Naive thymus-derived CD4-positive, alpha-beta T cell (primary cell): ENCODE measurements at regions of chr19 and their contacts with region 1.

Region 1: GRCh38 chr19:45692187-45693105 is at the start of gene QPCTL:
- DNase-seq: peak; percentile 76 to 99 (median 97)
- ATAC-seq: peak; percentile 93
- H3K4me3 ChIP-seq: peak within 1 kb of the TSS; percentile 90
- H3K4me3 Mint-ChIP-seq: peak within 1 kb of the TSS; percentile 89 to 99 (median 97)
- H3K27ac ChIP-seq: peak within 1 kb of the TSS; percentile 89
- H3K27ac Mint-ChIP-seq: peak within 1 kb of the TSS; percentile 94 to 98 (median 96)
- H3K4me1 ChIP-seq: peaks cover 7 to 15% of the 10 kb centered on the region in 2 donors
- H3K4me1 Mint-ChIP-seq: peaks cover 13 to 38% (median 22%) of the 10 kb centered on the region in 7 donors
- H3K27me3 ChIP-seq: no peaks in the 10 kb centered on the region
- H3K27me3 Mint-ChIP-seq: peaks cover 0 to 2% (median 0%) of the 10 kb centered on the region in 5 donors
- total RNA-seq, gene QPCTL: 6.1 to 8.9 (median 7.9) TPM

Region 2: GRCh38 chr19:45178262-45179071 is 514.0 kb before region 1 on chr19 and contains the start of gene BLOC1S3:
- CTCF ChIA-PET with region 1: no interaction called
- POLR2A ChIA-PET with region 1: no interaction called
- intact Hi-C with region 1: loop called in 1 of 2 experiments (anchors 10 kb)
- DNase-seq: peak; percentile 97 to 100 (median 100)
- ATAC-seq: peak; percentile 93
- H3K4me3 ChIP-seq: peak within 1 kb of the TSS; percentile 88
- H3K4me3 Mint-ChIP-seq: peak within 1 kb of the TSS; percentile 87 to 99 (median 96)
- H3K27ac ChIP-seq: peak within 1 kb of the TSS; percentile 83
- H3K27ac Mint-ChIP-seq: peak within 1 kb of the TSS; percentile 88 to 98 (median 94)
- H3K4me1 ChIP-seq: peaks cover 23 to 34% of the 10 kb centered on the region in 2 donors
- H3K4me1 Mint-ChIP-seq: peaks cover 9 to 63% (median 49%) of the 10 kb centered on the region in 7 donors
- H3K27me3 ChIP-seq: no peaks in the 10 kb centered on the region
- H3K27me3 Mint-ChIP-seq: no peaks in the 10 kb centered on the region
- total RNA-seq, gene BLOC1S3: 13.7 to 24.9 (median 15.4) TPM

Region 3: DNA sequence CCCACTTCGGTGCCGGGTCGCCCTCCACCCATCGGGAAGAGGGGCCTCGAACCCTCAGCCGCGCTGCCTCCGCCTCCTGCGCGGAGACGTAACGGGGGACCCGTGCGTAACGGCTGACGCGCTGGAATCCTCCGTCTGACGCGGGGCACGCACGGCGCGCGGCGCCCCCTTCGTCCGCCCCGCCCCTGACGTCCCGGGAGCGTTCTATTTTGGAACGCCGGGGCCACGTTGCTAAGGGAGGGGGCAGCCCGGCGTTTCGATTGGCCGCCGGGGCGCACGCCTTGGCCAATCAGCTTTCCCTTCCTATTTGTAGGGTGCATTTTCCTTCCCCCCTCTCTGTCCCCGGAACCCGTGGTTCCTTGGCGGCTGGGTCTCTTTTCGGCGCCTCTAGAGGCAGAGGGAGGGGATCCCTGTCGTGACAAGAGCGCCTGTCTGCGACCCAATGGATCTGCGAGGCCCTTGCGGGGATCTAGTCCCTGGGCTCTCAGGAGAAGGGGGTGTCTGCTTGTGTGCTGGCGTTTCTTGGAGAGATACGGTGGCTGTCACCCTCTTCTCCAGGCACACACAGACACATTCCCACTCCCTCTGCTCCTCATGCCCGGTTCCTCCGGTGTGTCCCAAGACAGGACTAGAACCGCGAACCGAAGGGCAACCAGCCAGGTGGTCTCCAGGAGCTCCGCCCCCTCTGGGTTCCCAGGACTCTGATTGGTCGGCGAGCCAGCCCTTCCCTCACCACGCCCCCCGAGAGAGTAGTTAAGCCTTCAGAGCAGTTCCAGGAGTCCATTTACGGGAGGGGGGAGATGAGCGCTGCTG is 223.1 kb before region 1 on chr19:
- CTCF ChIA-PET with region 1: no interaction called
- POLR2A ChIA-PET with region 1: no interaction called
- intact Hi-C with region 1: loop called (anchors 1 kb)
- DNase-seq: peak; percentile 79 to 98 (median 97)
- ATAC-seq: peak; percentile 70
- H3K4me3 ChIP-seq: peak overlapping the region; percentile 99
- H3K4me3 Mint-ChIP-seq: peak overlapping the region; percentile 87 to 96 (median 94)
- H3K27ac ChIP-seq: peak overlapping the region; percentile 98
- H3K27ac Mint-ChIP-seq: peak overlapping the region; percentile 90 to 100 (median 99)
- H3K4me1 ChIP-seq: peaks cover 10 to 16% of the 10 kb centered on the region in 2 donors
- H3K4me1 Mint-ChIP-seq: peaks cover 5 to 39% (median 19%) of the 10 kb centered on the region in 7 donors
- H3K27me3 ChIP-seq: no peaks in the 10 kb centered on the region
- H3K27me3 Mint-ChIP-seq: peaks cover 9 to 57% (median 17%) of the 10 kb centered on the region in 5 donors

Region 4: DNA sequence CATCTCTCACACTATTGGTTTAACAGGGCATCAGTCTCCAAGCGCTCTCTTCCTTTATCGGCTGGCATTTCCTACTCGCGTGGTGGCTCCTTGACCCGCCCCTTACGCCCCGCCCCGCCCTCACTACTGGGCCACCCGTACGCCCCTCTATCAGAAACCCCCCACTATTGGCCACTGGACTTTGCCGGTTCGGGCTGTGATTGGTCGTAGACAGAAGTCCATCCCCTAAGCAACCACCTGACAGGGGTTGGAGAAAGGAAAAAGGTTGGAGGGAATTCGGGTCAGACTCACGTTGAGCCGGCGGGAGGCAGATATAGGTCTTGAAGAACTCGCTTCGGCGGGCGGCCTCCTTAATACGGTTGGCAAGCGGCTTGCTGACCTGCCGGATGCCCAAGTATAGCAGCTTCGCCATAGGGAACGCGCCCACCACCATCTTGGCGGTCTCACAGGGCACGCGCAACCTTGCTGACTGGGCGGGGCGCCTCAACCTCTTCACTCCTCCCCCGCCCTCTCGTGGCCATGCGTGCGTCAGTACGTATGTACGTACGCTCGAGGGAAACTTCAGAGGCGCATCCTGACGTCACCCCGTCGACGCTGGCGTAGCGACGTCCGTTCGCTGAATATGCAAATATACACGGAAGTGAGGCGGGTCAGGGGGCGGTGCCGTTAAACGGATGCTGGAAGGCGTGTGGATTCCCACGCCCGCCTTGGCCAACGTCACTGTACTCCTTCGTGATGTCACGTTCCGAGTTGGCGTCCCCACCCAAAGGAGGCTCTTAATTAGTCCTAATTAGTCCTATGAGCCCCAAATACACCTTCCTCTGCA is 107.9 kb before region 1 on chr19 and contains the start of gene OPA3:
- CTCF ChIA-PET with region 1: no interaction called
- POLR2A ChIA-PET with region 1: no interaction called
- intact Hi-C with region 1: loop called (anchors 1 kb)
- DNase-seq: peak; percentile 88 to 100 (median 99)
- ATAC-seq: peak; percentile 92
- H3K4me3 ChIP-seq: peak within 1 kb of the TSS; percentile 85
- H3K4me3 Mint-ChIP-seq: peak within 1 kb of the TSS; percentile 90 to 99 (median 94)
- H3K27ac ChIP-seq: peak within 1 kb of the TSS; percentile 99
- H3K27ac Mint-ChIP-seq: peak within 1 kb of the TSS; percentile 97 to 100 (median 99)
- H3K4me1 ChIP-seq: peaks cover 6 to 10% of the 10 kb centered on the region in 2 donors
- H3K4me1 Mint-ChIP-seq: peaks cover 0 to 28% (median 20%) of the 10 kb centered on the region in 7 donors
- H3K27me3 ChIP-seq: no peaks in the 10 kb centered on the region
- H3K27me3 Mint-ChIP-seq: peaks cover 5 to 9% (median 7%) of the 10 kb centered on the region in 5 donors
- total RNA-seq, gene OPA3: 7.8 to 14.3 (median 9.0) TPM

Region 5: GRCh38 chr19:45717166-45717982 is 24.9 kb after region 1 on chr19:
- CTCF ChIA-PET with region 1: interaction called, 33 read pairs
- POLR2A ChIA-PET with region 1: interaction called, 22 read pairs
- intact Hi-C with region 1: loop called (anchors 1 kb)
- DNase-seq: peak; percentile 92 to 99 (median 98)
- ATAC-seq: peak; percentile 98
- H3K4me3 ChIP-seq: peak overlapping the region; percentile 80
- H3K4me3 Mint-ChIP-seq: peak overlapping the region; percentile 89 to 99 (median 95)
- H3K27ac ChIP-seq: peak overlapping the region; percentile 89
- H3K27ac Mint-ChIP-seq: peak overlapping the region; percentile 88 to 97 (median 96)
- H3K4me1 ChIP-seq: peaks cover 17 to 26% of the 10 kb centered on the region in 2 donors
- H3K4me1 Mint-ChIP-seq: peaks cover 26 to 55% (median 38%) of the 10 kb centered on the region in 7 donors
- H3K27me3 ChIP-seq: no peaks in the 10 kb centered on the region
- H3K27me3 Mint-ChIP-seq: no peaks in the 10 kb centered on the region

Region 6: GRCh38 chr19:45779231-45780145 is 87.0 kb after region 1 on chr19:
- CTCF ChIA-PET with region 1: no interaction called
- POLR2A ChIA-PET with region 1: no interaction called
- intact Hi-C with region 1: no loop called
- DNase-seq: peak; percentile 41 to 94 (median 59)
- ATAC-seq: peak; percentile 95
- H3K4me3 ChIP-seq: peak overlapping the region; percentile 59
- H3K4me3 Mint-ChIP-seq: peak overlapping the region; percentile 69 to 95 (median 81)
- H3K27ac ChIP-seq: no peak overlapping the region
- H3K27ac Mint-ChIP-seq: peak overlapping the region in 1 of 9 donors; percentile 69
- H3K4me1 ChIP-seq: peaks cover 7 to 17% of the 10 kb centered on the region in 2 donors
- H3K4me1 Mint-ChIP-seq: peaks cover 13 to 28% (median 18%) of the 10 kb centered on the region in 7 donors
- H3K27me3 ChIP-seq: peaks cover 0 to 18% of the 10 kb centered on the region in 2 donors
- H3K27me3 Mint-ChIP-seq: peaks cover 15 to 39% (median 36%) of the 10 kb centered on the region in 5 donors

Region 7: DNA sequence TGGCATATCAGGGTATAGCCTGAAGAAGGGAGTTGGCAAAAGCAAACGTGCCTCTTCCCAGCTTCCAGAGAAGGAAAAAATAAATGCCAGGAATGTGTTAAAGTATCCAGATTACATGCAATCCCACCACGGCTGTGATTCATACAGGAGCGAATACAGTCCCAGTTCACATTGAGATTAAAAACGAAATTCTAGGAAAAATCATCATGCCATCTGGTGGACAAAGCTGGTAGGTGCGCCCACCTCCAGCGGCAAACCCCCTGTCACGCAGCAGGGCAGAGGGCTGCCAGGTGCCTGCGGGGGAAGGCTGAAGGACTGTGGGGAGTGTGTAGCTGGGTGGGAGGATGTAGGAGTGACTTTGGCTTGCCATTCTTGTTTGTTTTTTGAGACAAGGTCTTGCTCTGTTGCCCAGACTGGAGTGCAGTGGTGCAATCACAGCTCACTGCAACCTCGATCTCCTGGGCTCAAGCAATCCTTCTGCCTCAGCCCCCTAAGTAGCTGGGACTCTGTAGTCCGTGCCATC is 106.6 kb after region 1 on chr19:
- CTCF ChIA-PET with region 1: no interaction called
- POLR2A ChIA-PET with region 1: no interaction called
- intact Hi-C with region 1: loop called in 1 of 2 experiments (anchors 1 kb)
- DNase-seq: peak; percentile 31 to 64 (median 56)
- ATAC-seq: peak; percentile 95
- H3K4me3 ChIP-seq: no peak overlapping the region
- H3K4me3 Mint-ChIP-seq: no peak overlapping the region
- H3K27ac ChIP-seq: no peak overlapping the region
- H3K27ac Mint-ChIP-seq: peak overlapping the region in 1 of 9 donors; percentile 17
- H3K4me1 ChIP-seq: peaks cover 0 to 3% of the 10 kb centered on the region in 2 donors
- H3K4me1 Mint-ChIP-seq: peaks cover 0 to 13% (median 10%) of the 10 kb centered on the region in 7 donors
- H3K27me3 ChIP-seq: peaks cover 0 to 8% of the 10 kb centered on the region in 2 donors
- H3K27me3 Mint-ChIP-seq: peaks cover 19 to 72% (median 22%) of the 10 kb centered on the region in 5 donors